ENCODE measurements at regions of chr2 and their contacts with region 1.

Region 1: DNA sequence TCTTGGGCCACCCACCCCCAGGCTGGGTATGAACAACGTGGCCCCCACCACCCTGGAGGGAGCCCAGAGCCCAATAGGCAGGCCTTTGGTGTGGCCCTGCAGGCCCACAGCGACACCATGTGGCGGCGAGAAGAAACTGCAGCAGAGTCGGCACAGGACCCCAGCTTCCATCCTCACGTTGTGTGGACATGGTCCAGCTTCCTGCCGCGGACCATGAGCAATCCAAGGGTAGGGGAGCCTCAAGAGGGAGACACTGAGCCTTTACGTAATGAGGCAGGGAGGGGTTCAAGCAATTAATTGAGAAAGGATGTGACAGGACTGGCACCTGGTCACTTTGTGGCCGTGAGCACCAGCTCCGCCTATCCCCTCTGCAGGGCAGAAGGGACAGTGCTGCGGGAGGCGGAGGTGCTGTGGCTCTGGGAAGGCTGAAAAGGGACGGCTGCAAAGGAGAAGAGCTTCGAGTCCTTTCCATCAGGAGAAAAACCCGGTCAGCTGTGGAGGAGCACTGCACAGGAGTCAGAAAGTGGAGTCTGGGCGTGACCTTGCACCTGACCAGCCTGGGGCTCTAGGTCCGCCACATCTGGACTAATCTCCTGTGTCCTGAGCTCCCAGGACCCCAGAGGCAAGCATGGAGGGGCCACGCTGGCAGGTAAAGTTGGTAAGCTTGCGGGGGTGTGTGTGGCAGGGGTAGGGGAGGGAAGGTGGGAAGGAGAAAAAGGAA is 44.8 kb downstream of the TMEM37 start:
- DNase-seq: peak; percentile 67 to 87
- H3K4me3 ChIP-seq: no peak overlapping the region
- H3K27ac ChIP-seq: no peak overlapping the region
- H3K4me1 ChIP-seq: peaks cover 0 to 14% (median 8%) of the 10 kb centered on the region in 4 experiments; a peak in 5 of 7 replicates
- H3K27me3 ChIP-seq: no peaks in the 10 kb centered on the region; a peak in 1 of 7 replicates
- CTCF ChIP-seq: peak; percentile 93 to 98 (median 98)
- EP300 ChIP-seq: no peak
- POLR2A ChIP-seq: no peak
- RAD21 ChIP-seq: peak; percentile 95 to 97

Region 2: GRCh38 chr2:118954297-118955060 is 522.0 kb before region 1 on chr2:
- CTCF ChIA-PET with region 1: no interaction called
- POLR2A ChIA-PET with region 1: no interaction called
- DNase-seq: no peak
- H3K4me3 ChIP-seq: no peak overlapping the region
- H3K27ac ChIP-seq: no peak overlapping the region
- H3K4me1 ChIP-seq: no peaks in the 10 kb centered on the region
- H3K27me3 ChIP-seq: no peaks in the 10 kb centered on the region
- CTCF ChIP-seq: no peak
- EP300 ChIP-seq: no peak
- POLR2A ChIP-seq: no peak
- RAD21 ChIP-seq: no peak

Region 3: DNA sequence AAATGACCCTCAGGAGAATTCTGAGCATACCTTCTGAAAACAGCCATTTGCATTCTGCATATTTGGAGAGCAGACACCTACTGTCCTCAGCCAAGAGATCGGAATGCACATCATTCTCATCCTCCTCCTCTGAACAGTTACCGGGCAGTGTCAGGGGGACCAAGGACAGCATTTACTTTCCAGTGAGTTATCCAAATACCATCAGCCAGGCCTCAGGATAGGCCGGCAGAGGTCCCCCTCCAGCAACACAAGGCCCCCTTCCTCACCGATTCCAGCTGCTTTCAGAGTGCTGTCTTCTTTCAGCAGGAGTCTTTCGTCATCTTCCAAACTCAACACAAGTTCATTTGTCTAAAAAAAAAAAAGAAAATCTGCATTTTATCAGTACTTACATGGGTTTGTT is 165.1 kb before region 1 on chr2:
- CTCF ChIA-PET with region 1: interaction called, 14 read pairs
- POLR2A ChIA-PET with region 1: no interaction called
- DNase-seq: no peak
- H3K4me3 ChIP-seq: no peak overlapping the region
- H3K27ac ChIP-seq: no peak overlapping the region
- H3K4me1 ChIP-seq: peaks cover 0 to 5% (median 1%) of the 10 kb centered on the region in 4 experiments; a peak in 2 of 7 replicates
- H3K27me3 ChIP-seq: no peaks in the 10 kb centered on the region
- CTCF ChIP-seq: peak; percentile 27 to 53 (median 51)
- EP300 ChIP-seq: no peak
- POLR2A ChIP-seq: no peak
- RAD21 ChIP-seq: peak; percentile 61 to 73

Region 4: GRCh38 chr2:119431155-119431975 is 45.1 kb before region 1 on chr2 and contains the start of gene TMEM37:
- CTCF ChIA-PET with region 1: interaction called, 15 read pairs
- POLR2A ChIA-PET with region 1: interaction called, 3 read pairs
- DNase-seq: peak; percentile 50 to 79
- H3K4me3 ChIP-seq: peak within 1 kb of the TSS; percentile 58 to 72 (median 68)
- H3K27ac ChIP-seq: peak within 1 kb of the TSS; percentile 65; the same call in 1 of the 2 replicates
- H3K4me1 ChIP-seq: peaks cover 0 to 28% (median 15%) of the 10 kb centered on the region in 4 experiments; a peak in 6 of 7 replicates
- H3K27me3 ChIP-seq: peaks cover 0 to 14% (median 6%) of the 10 kb centered on the region in 4 experiments; a peak in 6 of 7 replicates
- CTCF ChIP-seq: no peak
- EP300 ChIP-seq: no peak
- POLR2A ChIP-seq: peak in 1 of 2 experiments; percentile 26; a peak in 1 of 3 replicates
- RAD21 ChIP-seq: no peak; a peak in 1 of 4 replicates
- total RNA-seq, gene TMEM37: 9.9 and 11.0 TPM in 2 replicates

Region 5: GRCh38 chr2:119464981-119465380 is 11.5 kb before region 1 on chr2:
- CTCF ChIA-PET with region 1: interaction called, 90 read pairs
- POLR2A ChIA-PET with region 1: no interaction called
- DNase-seq: no peak
- H3K4me3 ChIP-seq: no peak overlapping the region
- H3K27ac ChIP-seq: no peak overlapping the region
- H3K4me1 ChIP-seq: peaks cover 0 to 4% (median 0%) of the 10 kb centered on the region in 4 experiments; a peak in 4 of 7 replicates
- H3K27me3 ChIP-seq: no peaks in the 10 kb centered on the region; a peak in 1 of 7 replicates
- CTCF ChIP-seq: no peak
- EP300 ChIP-seq: no peak
- POLR2A ChIP-seq: no peak
- RAD21 ChIP-seq: no peak

Region 6: DNA sequence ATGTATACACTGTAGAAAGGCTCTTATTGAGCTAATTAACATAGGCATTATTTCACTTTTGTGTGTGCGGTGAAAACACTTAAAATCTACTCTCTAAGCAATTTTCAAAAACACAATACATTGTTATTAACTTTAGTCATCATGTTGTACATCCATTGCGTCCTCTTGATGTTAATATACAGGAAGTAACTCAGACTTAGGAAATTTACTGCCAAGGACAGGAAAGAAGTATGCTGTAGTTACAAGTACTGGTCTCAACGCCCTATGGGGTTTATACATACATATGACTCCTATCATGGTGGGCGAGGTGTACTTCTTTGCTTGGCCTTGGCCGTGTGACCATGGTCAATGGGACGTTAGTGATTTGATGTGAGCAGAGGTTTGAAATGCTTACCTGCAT is 32.3 kb after region 1 on chr2:
- CTCF ChIA-PET with region 1: interaction called, 10 read pairs
- POLR2A ChIA-PET with region 1: no interaction called
- DNase-seq: no peak
- H3K4me3 ChIP-seq: no peak overlapping the region
- H3K27ac ChIP-seq: no peak overlapping the region
- H3K4me1 ChIP-seq: no peaks in the 10 kb centered on the region
- H3K27me3 ChIP-seq: no peaks in the 10 kb centered on the region
- CTCF ChIP-seq: no peak
- EP300 ChIP-seq: no peak
- POLR2A ChIP-seq: no peak
- RAD21 ChIP-seq: no peak

Region 7: DNA sequence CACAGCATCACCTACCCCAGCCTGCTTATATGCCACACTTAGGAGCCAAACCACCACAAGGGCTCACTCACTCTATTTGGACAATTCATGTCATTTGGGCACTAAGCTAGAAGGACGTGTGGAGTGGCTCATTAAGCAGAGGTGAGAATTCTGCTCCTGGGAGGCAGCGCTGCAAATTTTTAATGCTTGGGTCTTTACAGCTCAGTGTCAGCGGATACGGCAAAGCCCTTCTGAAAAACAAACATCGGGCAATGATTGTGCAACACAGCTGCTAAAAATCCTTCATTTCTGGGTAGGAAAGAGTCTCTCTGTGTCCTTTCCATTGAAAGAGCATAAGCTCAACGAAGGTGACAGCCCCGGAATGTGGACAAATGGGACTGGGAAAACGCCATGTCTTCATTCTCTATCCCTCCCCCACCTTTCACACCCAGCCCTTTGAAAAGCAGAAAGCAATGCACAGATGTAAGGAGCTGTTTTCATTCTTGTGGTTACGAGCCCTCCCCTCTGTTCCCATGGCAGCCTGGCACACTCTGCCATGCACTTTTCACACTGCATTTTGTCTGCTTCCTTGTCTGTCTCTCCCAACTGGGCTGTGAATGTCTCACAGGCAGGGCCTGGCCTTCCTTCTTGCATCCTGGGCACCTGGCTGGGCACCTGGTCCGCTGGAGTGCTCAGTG is 218.5 kb after region 1 on chr2:
- CTCF ChIA-PET with region 1: no interaction called
- POLR2A ChIA-PET with region 1: no interaction called
- DNase-seq: no peak
- H3K4me3 ChIP-seq: no peak overlapping the region
- H3K27ac ChIP-seq: no peak overlapping the region
- H3K4me1 ChIP-seq: peaks cover 14 to 39% (median 16%) of the 10 kb centered on the region in 4 experiments
- H3K27me3 ChIP-seq: no peaks in the 10 kb centered on the region
- CTCF ChIP-seq: no peak
- EP300 ChIP-seq: no peak
- POLR2A ChIP-seq: no peak
- RAD21 ChIP-seq: no peak

Region 8: DNA sequence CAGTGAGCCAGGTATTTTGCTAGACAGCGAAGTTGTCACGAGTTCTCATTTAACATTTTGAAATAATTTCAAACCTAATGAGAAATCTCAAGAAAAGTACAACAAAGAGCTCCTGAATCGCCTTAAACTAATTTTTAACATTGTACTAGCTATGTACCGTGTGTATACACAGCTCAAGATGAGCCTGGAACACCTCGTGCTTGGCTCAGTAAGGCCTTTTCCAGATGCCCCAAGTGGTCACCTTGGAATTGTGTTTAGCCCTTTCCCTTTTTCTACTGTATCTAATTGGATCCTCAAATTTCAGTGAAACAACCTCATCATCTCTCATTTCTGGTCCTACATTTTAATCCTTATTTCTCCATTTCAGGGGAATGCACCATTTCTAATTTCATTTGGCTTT is 290.5 kb after region 1 on chr2:
- CTCF ChIA-PET with region 1: no interaction called
- POLR2A ChIA-PET with region 1: no interaction called
- DNase-seq: no peak
- H3K4me3 ChIP-seq: peak overlapping the region in 1 of 4 experiments; percentile 86; a peak in 1 of 8 replicates
- H3K27ac ChIP-seq: no peak overlapping the region
- H3K4me1 ChIP-seq: peaks cover 3 to 18% (median 15%) of the 10 kb centered on the region in 4 experiments
- H3K27me3 ChIP-seq: no peaks in the 10 kb centered on the region
- CTCF ChIP-seq: peak in 1 of 3 experiments; percentile 33; a peak in 2 of 4 replicates
- EP300 ChIP-seq: no peak
- POLR2A ChIP-seq: peak in 1 of 2 experiments; percentile 53; a peak in 1 of 3 replicates
- RAD21 ChIP-seq: peak in 1 of 2 experiments; percentile 17; a peak in 1 of 4 replicates

Measured in H1 (cell line).